Right cardiac atrium (tissue), 5 donors: ENCODE measurements at regions of chr16 and their contacts with region 1.

Region 1: GRCh38 chr16:15888072-15888976 is at the start of gene CEP20:
- DNase-seq: peak; percentile 100
- ATAC-seq: peak; percentile 100
- H3K4me3 ChIP-seq: peak within 1 kb of the TSS; percentile 99
- H3K27ac ChIP-seq: peak within 1 kb of the TSS; percentile 98
- H3K4me1 ChIP-seq: peaks cover 8% of the 10 kb centered on the region
- H3K27me3 ChIP-seq: no peaks in the 10 kb centered on the region
- total RNA-seq, gene CEP20: 24.5 to 37.8 (median 26.8) TPM

Region 2: DNA sequence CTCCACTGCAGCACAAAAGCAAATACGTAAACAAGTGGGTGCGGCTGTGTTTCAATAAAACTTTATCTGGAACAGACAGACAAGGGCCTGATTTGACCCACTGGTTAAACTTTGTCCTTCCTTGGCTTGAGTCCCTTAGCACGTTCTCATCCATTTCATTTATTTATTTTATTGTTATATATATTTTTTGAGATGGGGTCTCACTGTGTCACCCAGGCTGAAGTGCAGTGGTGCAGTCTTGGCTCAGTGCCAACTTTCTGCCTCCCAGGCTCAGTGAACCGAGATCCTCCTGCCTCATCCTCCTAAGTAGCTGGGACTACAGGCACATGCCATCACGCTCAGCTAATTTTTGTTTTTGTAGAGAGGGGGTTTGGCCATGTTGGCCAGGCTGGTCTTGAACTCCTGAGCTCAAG is 95.8 kb before region 1 on chr16:
- intact Hi-C with region 1: no loop called
- DNase-seq: no peak
- ATAC-seq: no peak
- H3K4me3 ChIP-seq: no peak overlapping the region
- H3K27ac ChIP-seq: no peak overlapping the region
- H3K4me1 ChIP-seq: peaks cover 3% of the 10 kb centered on the region
- H3K27me3 ChIP-seq: no peaks in the 10 kb centered on the region

Region 3: DNA sequence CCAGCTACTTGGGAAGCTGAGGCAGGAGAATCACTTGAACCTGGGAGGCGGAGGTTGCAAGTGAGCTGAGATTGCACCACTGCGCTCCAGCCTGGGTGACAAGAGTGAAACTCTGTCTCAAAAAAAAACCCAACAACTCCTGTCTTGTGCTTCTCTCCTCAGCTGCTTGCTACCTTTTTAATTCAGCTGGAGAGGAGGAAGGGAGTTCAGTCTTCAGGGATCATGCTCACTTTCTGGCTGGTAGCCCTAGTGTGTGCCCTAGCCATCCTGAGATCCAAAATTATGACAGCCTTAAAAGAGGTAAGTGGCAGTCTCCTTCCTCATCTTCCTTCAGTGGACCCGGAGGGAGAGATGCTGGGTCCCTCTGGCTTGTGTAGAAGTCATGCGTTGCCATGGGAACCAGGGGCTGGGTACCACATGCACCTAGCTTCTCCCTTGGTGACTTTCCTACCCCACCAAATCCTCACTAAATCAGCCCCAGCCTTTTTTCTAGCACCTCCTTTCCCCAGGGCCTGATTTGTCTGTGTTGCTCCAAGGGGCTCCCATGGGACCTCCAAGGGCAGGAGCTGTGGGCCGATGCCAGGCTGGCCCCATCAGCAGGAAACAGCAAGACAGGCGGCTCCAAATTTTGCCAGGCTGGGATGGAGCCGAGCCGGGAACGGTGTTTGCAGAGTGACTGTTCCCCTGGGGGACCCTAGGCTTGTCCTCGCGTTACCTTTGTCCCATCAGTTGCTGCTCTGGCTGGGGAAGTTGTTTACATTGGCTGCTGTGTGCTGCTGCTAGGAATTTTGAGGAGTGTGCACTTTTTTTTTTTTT is 126.2 kb after region 1 on chr16:
- intact Hi-C with region 1: loop called in 1 of 4 experiments (anchors 10 kb)
- DNase-seq: peak; percentile 72 to 89 (median 89)
- ATAC-seq: peak; percentile 88 to 90
- H3K4me3 ChIP-seq: no peak overlapping the region
- H3K27ac ChIP-seq: peak overlapping the region; percentile 15
- H3K4me1 ChIP-seq: peaks cover 9% of the 10 kb centered on the region
- H3K27me3 ChIP-seq: no peaks in the 10 kb centered on the region

Region 4: DNA sequence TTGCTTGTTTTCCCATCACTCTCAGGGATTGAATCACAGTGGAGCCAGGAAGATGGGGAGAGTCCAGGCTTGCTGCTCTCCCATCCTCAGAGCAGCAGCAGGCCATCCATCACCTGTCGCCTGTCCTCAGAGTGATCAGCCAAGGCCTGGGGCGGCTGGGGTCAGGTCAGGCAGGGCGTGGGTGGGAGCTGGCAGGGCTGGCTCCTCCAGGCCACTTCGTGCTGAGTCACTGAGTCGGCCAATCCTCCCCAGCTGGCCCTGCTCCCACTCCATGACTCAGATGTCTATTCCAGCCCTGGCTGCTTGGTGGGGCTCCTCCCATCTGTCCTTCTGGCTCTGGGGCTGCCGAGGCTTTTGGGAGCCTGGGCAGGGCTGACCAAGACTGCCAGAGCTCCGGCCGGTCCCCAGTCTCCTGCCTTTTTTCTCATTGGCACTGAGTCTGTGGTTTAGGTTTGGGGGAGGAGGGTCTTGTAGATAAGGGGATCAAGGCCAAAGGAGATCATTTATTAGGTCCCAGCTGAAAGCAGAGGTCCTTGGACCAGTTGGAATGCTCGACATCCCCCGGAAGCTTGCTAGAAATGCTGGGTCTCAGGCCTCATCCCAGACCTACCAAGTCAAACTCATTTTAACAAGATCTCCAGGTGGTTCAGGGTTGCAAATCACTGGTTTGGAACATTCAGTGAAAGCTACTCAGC is 133.8 kb after region 1 on chr16:
- intact Hi-C with region 1: loop called in 2 of 4 experiments (anchors 10 kb)
- DNase-seq: peak; percentile 97 to 98 (median 98)
- ATAC-seq: peak; percentile 98
- H3K4me3 ChIP-seq: no peak overlapping the region
- H3K27ac ChIP-seq: peak overlapping the region; percentile 93
- H3K4me1 ChIP-seq: peaks cover 11% of the 10 kb centered on the region
- H3K27me3 ChIP-seq: no peaks in the 10 kb centered on the region